ENCODE measurements at regions of chr5 and their contacts with region 1.

Region 1: GRCh38 chr5:1641560-1642166 is 117.9 kb upstream of the LPCAT1 start:
- DNase-seq: peak; percentile 71
- H3K4me3 Mint-ChIP-seq: no peak overlapping the region
- H3K27ac Mint-ChIP-seq: no peak overlapping the region
- H3K4me1 Mint-ChIP-seq: peaks cover 8% of the 10 kb centered on the region
- H3K27me3 Mint-ChIP-seq: peaks cover 35% of the 10 kb centered on the region

Region 2: GRCh38 chr5:1167728-1168709 is 473.6 kb before region 1 on chr5:
- intact Hi-C with region 1: loop called (anchors 1 kb)
- DNase-seq: peak; percentile 61
- H3K4me3 Mint-ChIP-seq: peak overlapping the region; percentile 67
- H3K27ac Mint-ChIP-seq: peak overlapping the region; percentile 56
- H3K4me1 Mint-ChIP-seq: peaks cover 8% of the 10 kb centered on the region
- H3K27me3 Mint-ChIP-seq: peaks cover 7% of the 10 kb centered on the region

Region 3: DNA sequence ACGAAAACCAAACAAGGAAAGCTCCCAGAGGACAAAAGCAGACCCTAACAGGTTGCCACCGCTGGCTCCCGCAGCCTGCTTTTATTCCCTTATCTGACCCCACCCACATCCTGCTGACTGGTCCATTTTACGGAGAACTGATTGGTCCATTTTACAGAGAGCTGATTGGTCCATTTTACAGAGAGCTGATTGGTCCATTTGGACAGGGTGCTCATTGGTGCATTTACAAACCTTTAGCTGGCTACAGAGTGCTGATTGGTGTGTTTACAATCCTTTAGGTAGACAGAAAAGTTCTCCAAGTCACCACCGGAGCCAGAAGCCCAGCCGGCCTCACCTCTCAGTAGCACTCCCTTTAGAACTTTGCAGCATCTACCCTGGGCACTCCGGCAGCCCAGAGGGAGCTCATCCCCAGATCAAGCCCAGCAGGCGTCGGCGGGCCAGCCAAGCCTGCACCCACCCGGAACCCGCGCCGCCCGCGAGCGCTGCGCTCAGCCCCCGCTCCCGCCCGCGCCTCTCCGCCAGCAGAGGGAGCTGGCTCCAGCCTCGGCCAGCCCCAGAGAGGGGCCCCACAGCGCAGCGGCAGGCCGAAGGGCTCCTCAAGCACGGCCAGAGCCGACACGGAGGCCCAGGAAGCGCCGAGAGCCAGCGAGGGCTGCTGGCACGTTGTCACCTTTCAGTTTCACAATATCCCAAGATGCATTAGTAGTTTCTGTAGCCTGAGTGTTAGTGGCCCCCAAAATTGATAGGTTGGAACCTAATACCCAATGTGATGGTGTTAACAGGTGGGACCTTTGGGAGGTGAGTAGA is 261.4 kb before region 1 on chr5:
- intact Hi-C with region 1: loop called (anchors 1 kb)
- DNase-seq: peak; percentile 48
- H3K4me3 Mint-ChIP-seq: peak overlapping the region; percentile 58
- H3K27ac Mint-ChIP-seq: peak overlapping the region; percentile 67
- H3K4me1 Mint-ChIP-seq: peaks cover under 1% of the 10 kb centered on the region
- H3K27me3 Mint-ChIP-seq: peaks cover 2% of the 10 kb centered on the region

Region 4: GRCh38 chr5:1523771-1524480 is 117.7 kb before region 1 on chr5 and contains the start of gene LPCAT1:
- intact Hi-C with region 1: loop called (anchors 2 kb)
- DNase-seq: peak; percentile 74
- H3K4me3 Mint-ChIP-seq: peak within 1 kb of the TSS; percentile 91
- H3K27ac Mint-ChIP-seq: peak within 1 kb of the TSS; percentile 34
- H3K4me1 Mint-ChIP-seq: peaks cover 15% of the 10 kb centered on the region
- H3K27me3 Mint-ChIP-seq: no peaks in the 10 kb centered on the region
- total RNA-seq, gene LPCAT1: 103 and 110 TPM in 2 replicates

Region 5: GRCh38 chr5:1594357-1595106 is 47.1 kb before region 1 on chr5:
- intact Hi-C with region 1: loop called (anchors 5 kb)
- DNase-seq: peak; percentile 39
- H3K4me3 Mint-ChIP-seq: peak overlapping the region; percentile 60
- H3K27ac Mint-ChIP-seq: no peak overlapping the region
- H3K4me1 Mint-ChIP-seq: peaks cover 7% of the 10 kb centered on the region
- H3K27me3 Mint-ChIP-seq: no peaks in the 10 kb centered on the region